Activated T-helper 2 cell treated with anti-CD3 and anti-CD28 coated beads, Interferon-gamma antibody, Interleukin-2, Interleukin-4, amounts not matched to agents 10 μg/mL and 5 μg/mL and 100 μg/mL, durations not matched to agents 14 hours and 24 hours and 36 hours (primary cell): ENCODE measurements at regions of chr7 and their contacts with region 1.

Region 1: DNA sequence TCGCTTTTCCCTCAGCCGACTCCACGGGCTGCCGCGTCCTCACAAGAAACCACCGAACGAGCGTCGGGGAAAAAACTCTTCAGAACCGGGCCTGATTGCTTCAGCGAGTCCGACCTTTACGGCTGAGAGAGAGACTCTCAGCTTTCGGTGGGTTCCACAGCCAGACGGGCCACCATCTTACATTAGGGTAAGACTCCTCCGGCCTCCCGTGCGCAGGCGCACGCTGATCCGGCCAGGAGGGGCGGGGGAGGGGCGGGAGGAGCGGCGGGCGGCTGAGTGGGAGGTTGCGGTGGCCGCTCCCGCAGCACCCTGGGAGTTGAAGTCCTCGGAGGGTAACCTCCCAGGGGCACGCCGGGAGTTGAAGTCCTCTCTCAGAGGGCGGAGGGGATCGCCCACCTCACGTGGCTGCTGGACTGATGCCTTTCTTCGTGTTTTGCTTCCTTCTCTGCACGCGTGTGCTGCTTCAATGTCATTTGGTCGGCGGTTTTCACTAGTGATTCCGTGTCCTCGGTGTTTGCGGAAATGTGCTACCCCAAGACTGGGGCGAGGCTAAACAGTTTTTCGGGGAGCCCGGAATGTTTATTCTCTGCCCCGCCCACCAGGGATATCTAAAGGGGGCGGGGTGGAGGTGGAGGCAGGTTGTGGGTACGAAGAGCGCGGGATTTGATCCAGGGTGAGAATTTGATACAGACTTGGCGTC is at the start of gene CNOT4:
- DNase-seq: peak; percentile 91
- H3K4me3 Mint-ChIP-seq: no peak within 1 kb of the TSS
- H3K27ac Mint-ChIP-seq: no peak within 1 kb of the TSS
- H3K4me1 Mint-ChIP-seq: peaks cover 12% of the 10 kb centered on the region
- H3K27me3 Mint-ChIP-seq: no peaks in the 10 kb centered on the region
- total RNA-seq, gene CNOT4: 19.3 and 24.0 TPM in 2 replicates

Region 2: DNA sequence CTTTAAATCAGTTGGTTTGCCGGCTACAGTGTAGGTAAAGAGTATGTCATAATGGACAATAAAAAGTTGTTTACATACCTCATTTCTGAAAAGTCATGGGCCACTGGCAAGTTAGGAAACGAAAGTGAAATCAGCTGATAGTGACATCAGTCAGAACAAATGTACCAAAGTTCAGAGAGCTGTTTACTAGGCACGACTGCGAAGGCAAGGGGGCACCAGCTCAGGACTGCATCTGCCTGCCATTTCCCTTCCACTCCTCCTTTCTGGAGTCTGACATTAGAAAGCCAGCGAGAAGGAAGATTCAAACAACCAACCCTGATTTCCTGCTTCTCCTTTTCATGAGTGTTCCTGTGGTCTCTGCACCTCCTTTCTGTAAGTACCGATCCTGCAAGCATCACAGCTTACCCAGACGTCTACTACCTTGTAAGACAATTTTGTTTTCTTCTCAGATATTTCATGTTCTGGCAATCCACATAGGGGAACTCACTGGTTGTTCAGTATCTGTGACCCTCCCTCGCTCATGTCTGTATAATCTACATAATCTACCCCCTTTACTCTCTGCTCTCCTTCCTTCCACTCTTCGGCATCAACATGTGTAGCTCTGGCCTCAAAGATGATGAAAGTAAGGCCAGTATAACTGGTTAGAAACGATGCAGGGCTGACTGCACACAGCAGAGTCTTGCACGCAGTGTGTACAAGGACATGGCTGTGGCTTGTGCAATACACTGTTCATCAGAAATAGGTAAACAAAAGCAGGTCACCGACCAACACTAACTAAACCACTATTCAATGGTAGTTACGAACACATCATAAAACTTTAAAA is 361.9 kb before region 1 on chr7 and contains the start of gene TMEM140:
- intact Hi-C with region 1: loop called (anchors 5 kb)
- DNase-seq: peak; percentile 63
- H3K4me3 Mint-ChIP-seq: peak within 1 kb of the TSS; percentile 86
- H3K27ac Mint-ChIP-seq: peak within 1 kb of the TSS; percentile 97
- H3K4me1 Mint-ChIP-seq: peaks cover 65% of the 10 kb centered on the region
- H3K27me3 Mint-ChIP-seq: no peaks in the 10 kb centered on the region
- total RNA-seq, gene TMEM140: 3.0 and 4.8 TPM in 2 replicates

Region 3: DNA sequence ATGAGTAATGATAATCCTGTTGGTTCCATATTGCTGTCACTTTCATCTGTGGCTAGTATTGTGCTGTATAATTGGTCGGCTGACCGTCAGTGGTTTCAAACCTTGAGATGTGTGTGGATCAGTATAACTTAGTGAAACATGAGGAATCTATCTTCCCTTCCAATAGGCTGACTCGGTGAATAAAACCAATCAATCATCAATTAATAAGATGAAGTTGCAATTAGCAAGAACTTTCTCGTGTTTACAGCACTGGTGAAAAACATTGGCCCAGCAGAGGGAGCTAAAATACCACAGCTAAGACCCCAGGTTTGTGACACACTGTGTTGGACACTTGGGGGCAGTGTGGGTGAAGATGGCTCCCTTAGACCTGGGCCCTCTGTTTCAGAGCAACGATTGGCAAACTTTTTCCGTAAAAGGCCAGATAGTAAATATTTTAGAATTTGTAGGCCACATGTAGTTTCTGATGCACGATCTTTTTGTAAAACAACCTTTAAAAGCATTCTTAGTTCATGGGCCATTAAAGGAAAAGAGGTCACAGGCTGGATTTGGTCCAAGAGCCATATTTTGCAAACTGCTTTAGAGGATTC is 228.6 kb before region 1 on chr7:
- intact Hi-C with region 1: loop called (anchors 2 kb)
- DNase-seq: peak; percentile 67
- H3K4me3 Mint-ChIP-seq: no peak overlapping the region
- H3K27ac Mint-ChIP-seq: no peak overlapping the region
- H3K4me1 Mint-ChIP-seq: peaks cover 15% of the 10 kb centered on the region
- H3K27me3 Mint-ChIP-seq: peaks cover 10% of the 10 kb centered on the region

Region 4: DNA sequence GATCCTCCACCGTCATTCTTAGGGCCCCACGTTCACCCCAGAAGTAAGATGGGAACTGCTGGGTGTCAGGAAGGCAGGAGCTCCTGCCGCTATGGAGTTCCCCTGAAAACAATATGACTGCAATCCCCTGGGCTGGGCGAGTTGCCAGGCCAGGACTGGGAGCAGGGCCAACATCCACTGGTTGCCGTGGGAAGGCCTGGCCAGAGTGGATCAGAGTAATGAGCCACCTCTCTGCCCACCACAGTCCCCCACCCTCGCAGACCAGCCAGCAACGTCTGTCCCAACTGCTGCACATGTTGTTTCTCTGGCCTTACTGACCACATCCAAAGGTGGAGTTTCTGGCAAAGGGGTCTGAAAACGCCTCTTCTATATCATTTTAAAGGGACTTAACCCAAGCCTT is 189.8 kb before region 1 on chr7:
- intact Hi-C with region 1: no loop called
- DNase-seq: no peak
- H3K4me3 Mint-ChIP-seq: no peak overlapping the region
- H3K27ac Mint-ChIP-seq: no peak overlapping the region
- H3K4me1 Mint-ChIP-seq: no peaks in the 10 kb centered on the region
- H3K27me3 Mint-ChIP-seq: no peaks in the 10 kb centered on the region

Region 5: GRCh38 chr7:135558337-135558767 is 48.3 kb after region 1 on chr7:
- intact Hi-C with region 1: loop called (anchors 1 kb)
- DNase-seq: peak; percentile 64
- H3K4me3 Mint-ChIP-seq: no peak overlapping the region
- H3K27ac Mint-ChIP-seq: no peak overlapping the region
- H3K4me1 Mint-ChIP-seq: peaks cover 19% of the 10 kb centered on the region
- H3K27me3 Mint-ChIP-seq: peaks cover 1% of the 10 kb centered on the region

Region 6: DNA sequence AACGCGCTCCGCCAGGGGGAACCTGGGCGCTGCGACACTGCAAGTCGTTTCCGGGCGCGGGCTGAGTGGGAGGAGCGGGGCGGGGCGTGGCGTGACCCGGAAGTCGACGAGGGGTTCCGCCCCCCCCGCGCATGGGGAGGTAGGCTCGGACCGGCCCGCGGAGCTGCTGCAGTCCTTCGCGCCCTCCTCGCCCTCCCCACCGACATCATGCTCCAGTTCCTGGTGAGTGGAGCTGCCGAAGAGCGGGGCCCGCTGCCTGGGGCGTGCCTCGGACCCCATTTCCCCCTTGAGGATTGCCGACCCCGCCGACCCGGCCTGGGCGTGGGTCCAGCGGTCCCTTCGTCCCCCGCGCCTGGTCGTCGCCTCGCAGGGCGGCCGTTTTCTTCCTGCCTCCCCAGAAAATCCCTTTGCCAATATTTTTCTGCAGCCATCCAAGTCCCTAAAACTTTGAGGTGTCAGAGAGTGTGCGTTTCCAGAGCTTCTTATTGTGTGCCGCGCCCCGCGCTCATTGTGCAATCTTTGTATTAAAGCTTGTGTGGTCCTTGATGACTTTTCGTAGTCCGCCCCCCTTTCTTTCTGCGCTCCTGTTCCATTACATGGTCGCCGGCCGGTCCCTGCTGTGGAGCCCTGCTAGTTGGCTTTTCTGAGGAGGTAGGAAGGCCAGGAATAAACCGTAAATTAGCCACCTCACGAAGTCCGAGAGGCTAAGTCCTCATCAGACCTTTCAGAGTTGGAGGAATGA is 152.5 kb after region 1 on chr7 and contains the start of gene STMP1:
- intact Hi-C with region 1: loop called (anchors 1 kb)
- DNase-seq: peak; percentile 92
- H3K4me3 Mint-ChIP-seq: peak within 1 kb of the TSS; percentile 95
- H3K27ac Mint-ChIP-seq: peak within 1 kb of the TSS; percentile 91
- H3K4me1 Mint-ChIP-seq: peaks cover 28% of the 10 kb centered on the region
- H3K27me3 Mint-ChIP-seq: no peaks in the 10 kb centered on the region
- total RNA-seq, gene STMP1: 24.3 and 25.1 TPM in 2 replicates

Region 7: GRCh38 chr7:135901585-135902540 is 391.8 kb after region 1 on chr7:
- intact Hi-C with region 1: no loop called
- DNase-seq: no peak
- H3K4me3 Mint-ChIP-seq: no peak overlapping the region
- H3K27ac Mint-ChIP-seq: no peak overlapping the region
- H3K4me1 Mint-ChIP-seq: no peaks in the 10 kb centered on the region
- H3K27me3 Mint-ChIP-seq: no peaks in the 10 kb centered on the region